PC-9 (cell line): ENCODE measurements at regions of chr6 and their contacts with region 1.

Region 1: DNA sequence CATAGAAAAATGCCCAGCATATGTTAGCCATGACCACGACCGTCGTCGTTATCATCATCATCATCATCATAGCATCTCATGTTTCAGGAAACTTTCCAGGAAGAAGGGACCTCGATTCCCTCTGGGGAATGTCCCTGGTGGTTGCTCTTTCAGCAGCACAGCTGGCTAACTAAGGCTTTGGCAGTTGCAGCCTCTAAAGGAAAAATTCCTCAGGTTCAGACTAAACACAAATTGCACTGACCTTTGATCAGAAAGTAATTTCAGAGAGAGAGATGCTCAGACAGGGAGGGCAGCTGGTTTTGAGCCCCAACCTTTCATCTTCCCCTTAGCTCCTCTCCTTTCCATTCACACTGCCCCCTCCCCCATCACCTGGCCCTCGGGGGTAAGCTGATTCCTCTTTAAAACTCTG is 5.6 kb upstream of the CFB start:
- DNase-seq: peak; percentile 52 to 72
- H3K4me3 ChIP-seq: no peak overlapping the region
- H3K27ac ChIP-seq: no peak overlapping the region
- H3K4me1 ChIP-seq: peaks cover 28% of the 10 kb centered on the region
- H3K27me3 ChIP-seq: no peaks in the 10 kb centered on the region
- CTCF ChIP-seq: no peak

Region 2: DNA sequence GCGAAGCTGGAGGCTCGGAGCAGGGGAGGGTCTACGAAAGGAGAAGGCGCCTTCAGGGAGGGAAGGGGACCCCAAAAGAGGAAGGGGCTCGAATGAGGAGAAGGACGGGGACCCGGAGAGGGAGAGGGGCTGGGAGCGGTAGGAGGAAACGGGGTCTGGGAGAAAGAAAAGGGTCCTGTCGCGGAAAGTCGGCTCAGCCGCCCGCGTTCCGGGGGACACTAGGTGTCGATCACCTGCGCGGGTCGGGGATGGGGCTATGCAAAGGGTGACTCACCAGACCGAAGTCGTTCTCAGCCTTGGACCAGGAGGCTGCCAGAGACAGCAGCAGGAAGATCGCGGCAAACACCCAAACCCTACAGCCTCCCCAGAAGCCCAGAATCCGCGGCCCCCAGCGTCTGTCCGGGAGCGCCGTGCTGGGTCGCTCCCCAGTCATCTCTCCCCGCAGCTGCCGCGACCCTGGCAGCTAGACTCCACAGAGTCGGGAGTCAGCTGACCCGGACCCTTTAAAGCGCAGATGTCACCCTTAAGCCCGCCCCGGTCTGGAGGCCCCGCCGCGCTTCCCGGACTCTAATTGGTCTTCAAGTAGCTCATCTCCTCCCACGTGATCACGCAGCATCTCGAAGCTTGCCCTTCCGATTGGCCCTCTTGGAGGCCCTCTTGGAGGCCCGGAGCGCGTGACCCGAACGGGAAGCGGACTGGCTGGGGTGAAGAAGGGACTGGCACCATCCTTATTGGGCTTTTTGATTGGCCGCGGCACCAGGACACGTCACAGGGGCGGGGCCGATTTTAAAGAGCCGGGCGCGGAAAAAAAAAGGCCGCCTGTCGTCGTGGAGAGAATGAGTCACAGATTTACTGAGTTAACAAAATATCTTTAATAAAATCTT is 77.7 kb before region 1 on chr6 and contains the start of gene NEU1:
- CTCF ChIA-PET with region 1: interaction called, 3 read pairs
- POLR2A ChIA-PET with region 1: interaction called, 11 read pairs
- intact Hi-C with region 1: no loop called
- DNase-seq: peak; percentile 99 to 100
- H3K4me3 ChIP-seq: peak within 1 kb of the TSS; percentile 65
- H3K27ac ChIP-seq: peak within 1 kb of the TSS; percentile 70
- H3K4me1 ChIP-seq: peaks cover 23% of the 10 kb centered on the region
- H3K27me3 ChIP-seq: no peaks in the 10 kb centered on the region
- CTCF ChIP-seq: no peak
- total RNA-seq, gene NEU1: 23.1 and 23.4 TPM in 2 replicates

Region 3: DNA sequence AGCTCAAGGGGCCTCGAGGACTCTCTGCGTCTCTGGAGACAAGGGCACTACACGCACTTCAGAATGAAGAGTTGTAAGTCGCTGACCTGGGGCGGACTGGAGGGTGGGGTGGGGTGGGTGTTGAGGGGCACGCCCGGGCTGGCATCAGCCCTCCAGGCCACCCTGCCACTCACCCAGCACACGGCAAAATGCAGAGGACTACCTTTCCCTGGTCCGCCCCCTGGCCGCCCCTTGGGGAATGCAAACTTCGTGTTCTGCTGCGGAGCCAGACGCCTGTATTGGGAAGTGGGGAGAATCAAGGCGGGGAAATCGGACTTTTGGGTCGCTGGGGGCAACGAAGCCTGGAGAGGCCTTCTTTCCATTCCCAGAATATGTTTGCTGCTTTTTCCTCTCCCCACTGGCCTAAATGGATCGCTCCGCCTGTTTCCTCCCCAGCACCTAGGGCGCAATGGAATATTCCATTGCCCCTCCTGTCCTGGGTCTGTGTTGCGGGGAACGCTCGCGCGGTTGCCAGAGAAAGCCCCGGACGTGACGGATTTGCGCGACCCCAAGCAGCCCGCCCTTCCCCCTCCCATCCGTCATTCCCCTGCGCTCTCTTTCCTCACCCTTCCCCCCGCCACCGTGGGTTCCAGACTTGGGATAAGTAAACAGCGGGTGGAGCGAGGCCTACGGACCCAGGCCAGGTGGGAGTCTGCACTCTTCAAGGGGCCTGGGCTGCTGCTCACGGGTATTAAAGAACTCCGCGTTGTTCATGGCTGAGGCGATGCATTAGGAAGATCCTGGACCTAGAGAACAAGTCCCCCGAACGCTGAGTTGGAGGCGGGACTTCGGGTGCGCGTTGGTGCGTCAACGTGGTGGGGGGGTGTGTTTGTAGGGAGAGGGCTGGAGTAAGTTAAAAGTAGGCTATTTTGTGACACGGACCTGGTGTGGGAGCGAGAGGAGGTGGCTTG is 213.6 kb after region 1 on chr6 and contains the start of gene PPT2:
- CTCF ChIA-PET with region 1: no interaction called
- POLR2A ChIA-PET with region 1: no interaction called
- intact Hi-C with region 1: no loop called
- DNase-seq: peak; percentile 70 to 77
- H3K4me3 ChIP-seq: peak within 1 kb of the TSS; percentile 77
- H3K27ac ChIP-seq: peak within 1 kb of the TSS; percentile 96
- H3K4me1 ChIP-seq: peaks cover 18% of the 10 kb centered on the region
- H3K27me3 ChIP-seq: no peaks in the 10 kb centered on the region
- CTCF ChIP-seq: peak; percentile 45; the same call in 1 of the 2 replicates
- total RNA-seq, gene PPT2: 38.2 and 42.5 TPM in 2 replicates